ENCODE measurements at regions of chr1 and their contacts with region 1.

Region 1: GRCh38 chr1:172826096-172826743 is 167.3 kb downstream of the FASLG start:
- DNase-seq: peak; percentile 99
- ATAC-seq: peak; percentile 86
- H3K4me3 ChIP-seq: no peak overlapping the region
- H3K27ac ChIP-seq: no peak overlapping the region
- H3K4me1 ChIP-seq: peaks cover 11% of the 10 kb centered on the region
- H3K27me3 ChIP-seq: no peaks in the 10 kb centered on the region
- CTCF ChIP-seq: peak; percentile 100

Region 2: GRCh38 chr1:172906778-172907592 is 80.8 kb after region 1 on chr1:
- CTCF ChIA-PET with region 1: interaction called, 9 read pairs
- POLR2A ChIA-PET with region 1: no interaction called
- intact Hi-C with region 1: loop called (anchors 2 kb)
- DNase-seq: peak; percentile 99
- ATAC-seq: peak; percentile 25
- H3K4me3 ChIP-seq: no peak overlapping the region; the same call in 1 of the 2 replicates
- H3K27ac ChIP-seq: peak overlapping the region; percentile 77
- H3K4me1 ChIP-seq: peaks cover 64% of the 10 kb centered on the region
- H3K27me3 ChIP-seq: no peaks in the 10 kb centered on the region
- CTCF ChIP-seq: no peak

Region 3: DNA sequence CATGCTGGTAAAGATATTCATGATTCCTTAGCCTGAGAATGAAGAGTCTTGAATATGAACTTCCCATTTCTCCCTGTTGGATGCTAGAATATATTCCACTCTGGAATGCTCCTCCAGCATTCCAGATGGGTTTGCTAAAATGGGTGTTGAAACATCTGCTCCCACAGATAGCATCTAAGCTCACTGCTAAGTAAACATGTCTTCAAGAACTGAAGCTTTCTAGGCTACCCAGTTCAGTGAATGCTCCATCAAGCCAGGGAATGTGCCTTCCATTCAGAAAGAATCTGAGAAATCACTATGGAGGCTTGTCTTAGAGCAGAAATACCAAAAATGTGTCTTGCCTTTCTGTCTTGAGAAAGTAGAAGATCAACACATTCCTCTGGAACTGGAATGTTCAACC is 143.4 kb after region 1 on chr1:
- CTCF ChIA-PET with region 1: no interaction called
- POLR2A ChIA-PET with region 1: no interaction called
- intact Hi-C with region 1: loop called (anchors 2 kb)
- DNase-seq: peak; percentile 75
- ATAC-seq: no peak
- H3K4me3 ChIP-seq: no peak overlapping the region
- H3K27ac ChIP-seq: peak overlapping the region; percentile 52
- H3K4me1 ChIP-seq: peaks cover 45% of the 10 kb centered on the region
- H3K27me3 ChIP-seq: no peaks in the 10 kb centered on the region
- CTCF ChIP-seq: no peak

Region 4: GRCh38 chr1:173048621-173049321 is 222.6 kb after region 1 on chr1:
- CTCF ChIA-PET with region 1: no interaction called
- POLR2A ChIA-PET with region 1: no interaction called
- intact Hi-C with region 1: loop called (anchors 1 kb)
- DNase-seq: peak; percentile 98
- ATAC-seq: peak; percentile 85
- H3K4me3 ChIP-seq: no peak overlapping the region
- H3K27ac ChIP-seq: peak overlapping the region; percentile 51
- H3K4me1 ChIP-seq: peaks cover 55% of the 10 kb centered on the region
- H3K27me3 ChIP-seq: no peaks in the 10 kb centered on the region
- CTCF ChIP-seq: no peak

Region 5: DNA sequence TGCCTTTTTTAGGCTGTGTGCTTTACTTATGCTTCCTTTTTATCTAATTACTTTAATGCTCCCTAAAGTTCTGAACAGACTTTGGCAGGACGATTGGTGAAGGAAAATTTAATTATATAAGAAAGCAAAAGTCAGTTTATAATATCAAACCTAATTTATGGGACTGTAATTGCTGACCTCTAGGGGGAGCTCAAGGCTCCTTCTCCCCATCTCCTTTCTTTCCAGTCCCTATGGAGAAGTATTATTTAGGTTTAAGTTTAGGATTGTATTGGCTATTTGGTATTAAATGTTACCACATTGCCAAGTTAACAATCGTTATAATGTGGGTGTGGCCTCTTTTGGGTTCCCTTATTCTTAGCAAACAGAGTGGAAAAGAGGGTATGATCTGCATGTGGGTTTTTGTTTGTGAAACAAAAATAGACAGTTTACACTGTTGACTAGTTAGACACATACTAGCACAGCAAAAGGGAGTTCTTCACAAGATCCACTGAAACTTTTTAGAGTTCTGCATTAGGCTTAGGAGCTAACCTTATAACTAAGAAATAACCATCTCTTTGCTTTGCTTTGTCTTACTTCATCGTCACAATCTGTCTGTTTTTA is 429.1 kb after region 1 on chr1:
- CTCF ChIA-PET with region 1: interaction called, 4 read pairs
- POLR2A ChIA-PET with region 1: no interaction called
- intact Hi-C with region 1: loop called (anchors 1 kb)
- DNase-seq: peak; percentile 90
- ATAC-seq: peak; percentile 90
- H3K4me3 ChIP-seq: no peak overlapping the region
- H3K27ac ChIP-seq: no peak overlapping the region
- H3K4me1 ChIP-seq: no peaks in the 10 kb centered on the region
- H3K27me3 ChIP-seq: no peaks in the 10 kb centered on the region
- CTCF ChIP-seq: peak; percentile 100

Measured in PC-3 (cell line).